ENCODE measurements at regions of chr12 and their contacts with region 1.

Region 1: DNA sequence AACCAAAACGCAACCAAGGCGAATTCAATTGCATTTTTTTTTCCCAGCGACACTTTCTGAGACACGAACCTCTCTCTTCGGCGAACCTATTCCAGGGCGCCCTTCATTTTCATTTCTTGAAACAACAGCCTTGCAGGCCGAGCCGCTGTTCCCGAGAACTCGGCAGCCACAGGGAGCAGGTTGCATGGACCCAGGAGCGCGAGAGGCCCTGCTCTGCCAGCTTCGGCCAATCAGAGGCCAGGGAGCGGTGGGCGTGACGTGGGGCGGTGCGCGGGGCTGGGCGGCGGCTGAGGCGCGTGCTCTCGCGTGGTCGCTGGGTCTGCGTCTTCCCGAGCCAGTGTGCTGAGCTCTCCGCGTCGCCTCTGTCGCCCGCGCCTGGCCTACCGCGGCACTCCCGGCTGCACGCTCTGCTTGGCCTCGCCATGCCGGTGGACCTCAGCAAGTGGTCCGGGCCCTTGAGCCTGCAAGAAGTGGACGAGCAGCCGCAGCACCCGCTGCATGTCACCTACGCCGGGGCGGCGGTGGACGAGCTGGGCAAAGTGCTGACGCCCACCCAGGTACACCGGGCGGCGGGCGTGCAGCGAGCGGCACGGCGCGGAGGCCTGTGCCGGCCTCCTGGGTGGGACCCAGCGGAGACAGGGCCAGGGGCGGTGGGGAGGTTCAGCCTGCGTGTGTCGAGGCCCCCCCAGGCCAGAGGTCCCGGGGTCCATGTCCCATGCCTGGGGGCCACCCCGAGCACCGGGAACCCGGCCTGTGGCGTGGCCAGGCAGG is at the start of gene PEBP1:
- DNase-seq: peak; percentile 77
- ATAC-seq: peak; percentile 98
- H3K4me3 ChIP-seq: peak within 1 kb of the TSS; percentile 86
- H3K27ac ChIP-seq: peak within 1 kb of the TSS; percentile 86
- H3K4me1 ChIP-seq: peaks cover 11% of the 10 kb centered on the region
- H3K27me3 ChIP-seq: no peaks in the 10 kb centered on the region
- CTCF ChIP-seq: no peak
- EP300 ChIP-seq: no peak
- POLR2A ChIP-seq: peak; percentile 97
- RAD21 ChIP-seq: no peak
- polyA plus RNA-seq, gene PEBP1: 79.4 to 150 TPM

Region 2: DNA sequence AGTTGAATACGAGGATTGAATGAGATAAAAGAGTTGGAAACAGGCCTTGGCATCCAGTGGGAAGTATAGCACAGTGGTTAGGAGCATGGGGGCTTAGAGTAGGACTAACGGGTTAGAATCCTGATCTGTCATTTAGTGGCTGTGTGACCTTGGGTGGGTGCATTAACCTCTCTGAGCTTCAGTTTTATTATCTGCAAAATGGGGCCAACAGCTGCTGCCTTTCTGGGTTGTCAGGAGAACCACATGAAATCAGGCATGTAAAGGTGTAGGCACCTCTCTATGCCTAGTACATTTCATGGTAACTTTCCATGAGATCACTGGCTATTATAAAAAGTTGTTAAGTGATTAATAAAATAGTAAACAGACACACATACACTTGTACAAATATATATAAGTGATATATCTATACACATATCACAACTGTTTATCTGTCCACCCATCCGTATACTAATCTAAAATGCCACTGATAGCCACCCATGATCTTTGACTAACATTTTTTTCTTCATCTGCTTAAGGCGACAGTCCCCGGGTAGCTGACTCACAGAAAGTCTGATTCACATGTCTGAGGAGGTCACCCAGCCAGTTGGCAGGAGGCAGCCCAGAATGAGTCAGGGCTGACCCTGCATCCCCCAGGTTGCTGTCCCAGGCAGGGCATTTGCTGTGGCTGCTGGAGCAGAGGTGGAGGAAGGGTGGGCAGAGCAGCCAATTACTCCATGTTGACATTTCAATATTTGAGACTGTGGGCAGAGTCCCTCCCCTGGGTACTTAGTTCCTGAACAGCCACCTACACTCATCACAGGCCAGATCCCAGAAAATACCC is 648.9 kb before region 1 on chr12:
- CTCF ChIA-PET with region 1: no interaction called
- POLR2A ChIA-PET with region 1: no interaction called
- RAD21 ChIA-PET with region 1: no interaction called
- SMC1A ChIA-PET with region 1: no interaction called
- in situ Hi-C with region 1: no loop called
- intact Hi-C with region 1: no loop called
- DNase-seq: no peak
- ATAC-seq: no peak
- H3K4me3 ChIP-seq: no peak overlapping the region
- H3K27ac ChIP-seq: no peak overlapping the region
- H3K4me1 ChIP-seq: no peaks in the 10 kb centered on the region
- H3K27me3 ChIP-seq: no peaks in the 10 kb centered on the region
- CTCF ChIP-seq: no peak
- EP300 ChIP-seq: no peak
- POLR2A ChIP-seq: no peak
- RAD21 ChIP-seq: no peak

Region 3: GRCh38 chr12:118102092-118102491 is 33.9 kb before region 1 on chr12:
- CTCF ChIA-PET with region 1: no interaction called
- POLR2A ChIA-PET with region 1: no interaction called
- RAD21 ChIA-PET with region 1: no interaction called
- SMC1A ChIA-PET with region 1: no interaction called
- in situ Hi-C with region 1: no loop called
- intact Hi-C with region 1: no loop called
- DNase-seq: no peak
- ATAC-seq: no peak
- H3K4me3 ChIP-seq: no peak overlapping the region
- H3K27ac ChIP-seq: no peak overlapping the region
- H3K4me1 ChIP-seq: no peaks in the 10 kb centered on the region; the same call in 1 of the 2 replicates
- H3K27me3 ChIP-seq: peaks cover 5 to 10% of the 10 kb centered on the region in 2 experiments; a peak in 3 of 4 replicates
- CTCF ChIP-seq: no peak
- EP300 ChIP-seq: no peak
- POLR2A ChIP-seq: no peak
- RAD21 ChIP-seq: no peak

Region 4: DNA sequence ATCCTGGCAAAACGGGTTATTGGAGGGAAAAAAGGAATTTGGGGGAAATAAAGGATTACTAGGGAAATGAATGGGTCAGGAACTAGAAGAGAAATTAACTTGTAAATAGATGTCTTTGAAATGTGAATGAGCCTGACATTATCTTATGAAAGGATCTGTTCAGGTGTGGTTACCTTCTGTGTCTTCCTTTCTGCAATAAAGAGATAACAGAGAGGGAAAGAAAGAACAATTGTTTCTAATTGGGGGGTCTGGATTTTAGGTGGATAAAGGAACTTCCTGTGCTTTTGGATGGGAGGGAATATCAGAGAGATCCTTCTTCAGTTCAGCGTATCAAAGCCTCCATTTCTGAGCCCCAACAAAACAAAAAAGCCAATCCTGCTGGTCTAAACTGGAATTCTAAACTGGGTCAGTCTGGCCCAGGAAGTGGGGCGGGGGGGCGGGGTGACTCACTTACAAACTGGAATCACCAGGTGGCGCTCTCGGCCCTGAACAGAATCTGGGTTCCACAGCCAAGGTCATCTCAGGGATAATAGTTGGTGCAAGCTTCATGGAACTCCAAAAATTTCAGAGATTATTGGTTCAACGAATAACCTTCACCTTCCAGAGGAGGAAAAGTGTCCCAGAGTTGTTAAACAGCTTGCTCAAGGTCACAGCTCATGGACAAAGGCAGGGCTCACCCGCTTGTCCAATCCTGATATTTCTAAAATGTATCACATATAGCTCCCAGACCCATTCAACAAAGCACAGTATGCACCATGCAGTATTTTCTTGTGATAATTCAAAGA is 15.2 kb before region 1 on chr12:
- CTCF ChIA-PET with region 1: interaction called, 18 read pairs
- POLR2A ChIA-PET with region 1: interaction called, 4 read pairs
- RAD21 ChIA-PET with region 1: interaction called, 23 read pairs
- SMC1A ChIA-PET with region 1: interaction called, 4 read pairs
- in situ Hi-C with region 1: no loop called
- intact Hi-C with region 1: no loop called
- DNase-seq: no peak
- ATAC-seq: peak; percentile 97
- H3K4me3 ChIP-seq: no peak overlapping the region
- H3K27ac ChIP-seq: peak overlapping the region; percentile 83
- H3K4me1 ChIP-seq: no peaks in the 10 kb centered on the region; the same call in 1 of the 2 replicates
- H3K27me3 ChIP-seq: no peaks in the 10 kb centered on the region
- CTCF ChIP-seq: peak; percentile 50 to 70 (median 64)
- EP300 ChIP-seq: no peak
- POLR2A ChIP-seq: no peak
- RAD21 ChIP-seq: peak; percentile 70